SK-N-SH (cell line): ENCODE measurements at regions of chr15 and their contacts with region 1.

Region 1: GRCh38 chr15:100341662-100342560 is at the start of gene ADAMTS17:
- DNase-seq: peak; percentile 96
- H3K4me3 ChIP-seq: peak within 1 kb of the TSS; percentile 51 to 56; a peak in 3 of 4 replicates
- H3K27ac ChIP-seq: no peak within 1 kb of the TSS
- H3K4me1 ChIP-seq: peaks cover 0 to 8% of the 10 kb centered on the region in 2 experiments; a peak in 1 of 4 replicates
- H3K27me3 ChIP-seq: no peaks in the 10 kb centered on the region
- CTCF ChIP-seq: peak; percentile 60
- EP300 ChIP-seq: no peak
- RAD21 ChIP-seq: peak; percentile 63
- polyA plus RNA-seq, gene ADAMTS17: not detected in 2 replicates

Region 2: GRCh38 chr15:99961011-99961441 is 380.9 kb before region 1 on chr15:
- CTCF ChIA-PET with region 1: interaction called, 21 read pairs
- POLR2A ChIA-PET with region 1: no interaction called
- DNase-seq: no peak
- H3K4me3 ChIP-seq: no peak overlapping the region
- H3K27ac ChIP-seq: no peak overlapping the region
- H3K4me1 ChIP-seq: no peaks in the 10 kb centered on the region
- H3K27me3 ChIP-seq: no peaks in the 10 kb centered on the region
- CTCF ChIP-seq: no peak
- EP300 ChIP-seq: no peak
- RAD21 ChIP-seq: peak; percentile 23; the same call in 1 of the 2 replicates

Region 3: GRCh38 chr15:100111103-100112060 is 230.5 kb before region 1 on chr15:
- CTCF ChIA-PET with region 1: interaction called, 50 read pairs
- POLR2A ChIA-PET with region 1: no interaction called
- DNase-seq: no peak
- H3K4me3 ChIP-seq: no peak overlapping the region
- H3K27ac ChIP-seq: no peak overlapping the region
- H3K4me1 ChIP-seq: peaks cover 0 to 34% of the 10 kb centered on the region in 2 experiments; a peak in 1 of 4 replicates
- H3K27me3 ChIP-seq: no peaks in the 10 kb centered on the region
- CTCF ChIP-seq: no peak
- EP300 ChIP-seq: no peak
- RAD21 ChIP-seq: no peak

Region 4: GRCh38 chr15:100330629-100331215 is 11.2 kb before region 1 on chr15:
- CTCF ChIA-PET with region 1: interaction called, 119 read pairs
- POLR2A ChIA-PET with region 1: no interaction called
- DNase-seq: no peak
- H3K4me3 ChIP-seq: no peak overlapping the region
- H3K27ac ChIP-seq: no peak overlapping the region
- H3K4me1 ChIP-seq: peaks cover 0 to 21% of the 10 kb centered on the region in 2 experiments; a peak in 1 of 4 replicates
- H3K27me3 ChIP-seq: no peaks in the 10 kb centered on the region
- CTCF ChIP-seq: no peak
- EP300 ChIP-seq: no peak
- RAD21 ChIP-seq: no peak

Region 5: GRCh38 chr15:100383302-100384107 is 41.6 kb after region 1 on chr15:
- CTCF ChIA-PET with region 1: interaction called, 184 read pairs
- POLR2A ChIA-PET with region 1: no interaction called
- DNase-seq: peak; percentile 45
- H3K4me3 ChIP-seq: no peak overlapping the region
- H3K27ac ChIP-seq: no peak overlapping the region
- H3K4me1 ChIP-seq: no peaks in the 10 kb centered on the region
- H3K27me3 ChIP-seq: no peaks in the 10 kb centered on the region
- CTCF ChIP-seq: no peak
- EP300 ChIP-seq: no peak
- RAD21 ChIP-seq: peak; percentile 69